Activated CD8-positive, alpha-beta memory T cell treated with anti-CD3 and anti-CD28 coated beads, Interleukin-2, amount 10 ng/mL, durations not matched to agents 7 days and 5 days (primary cell): ENCODE measurements at regions of chr17 and their contacts with region 1.

Region 1: DNA sequence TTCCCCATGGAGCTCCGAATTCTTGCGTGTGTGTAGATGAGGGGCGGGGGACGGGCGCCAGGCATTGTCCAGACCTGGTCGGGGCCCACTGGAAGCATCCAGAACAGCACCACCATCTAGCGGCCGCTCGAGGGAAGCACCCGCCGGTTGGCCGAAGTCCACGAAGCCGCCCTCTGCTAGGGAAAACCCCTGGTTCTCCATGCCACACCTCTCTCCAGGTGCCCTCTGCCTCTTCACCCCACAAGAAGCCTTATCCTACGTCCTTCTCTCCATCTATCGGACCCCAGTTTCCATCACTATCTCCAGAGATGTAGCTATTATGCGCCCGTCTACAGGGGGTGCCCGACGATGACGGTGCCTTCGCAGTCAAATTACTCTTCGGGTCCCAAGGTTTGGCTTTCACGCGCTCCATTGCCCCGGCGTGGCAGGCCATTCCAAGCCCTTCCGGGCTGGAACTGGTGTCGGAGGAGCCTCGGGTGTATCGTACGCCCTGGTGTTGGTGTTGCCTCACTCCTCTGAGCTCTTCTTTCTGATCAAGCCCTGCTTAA is 617 bp upstream of the SENP3 start:
- DNase-seq: peak; percentile 91
- ATAC-seq: peak; percentile 75
- H3K4me3 Mint-ChIP-seq: peak overlapping the region; percentile 85
- H3K27ac Mint-ChIP-seq: peak overlapping the region; percentile 92
- H3K4me1 Mint-ChIP-seq: peaks cover 51% of the 10 kb centered on the region
- H3K27me3 Mint-ChIP-seq: no peaks in the 10 kb centered on the region

Region 2: DNA sequence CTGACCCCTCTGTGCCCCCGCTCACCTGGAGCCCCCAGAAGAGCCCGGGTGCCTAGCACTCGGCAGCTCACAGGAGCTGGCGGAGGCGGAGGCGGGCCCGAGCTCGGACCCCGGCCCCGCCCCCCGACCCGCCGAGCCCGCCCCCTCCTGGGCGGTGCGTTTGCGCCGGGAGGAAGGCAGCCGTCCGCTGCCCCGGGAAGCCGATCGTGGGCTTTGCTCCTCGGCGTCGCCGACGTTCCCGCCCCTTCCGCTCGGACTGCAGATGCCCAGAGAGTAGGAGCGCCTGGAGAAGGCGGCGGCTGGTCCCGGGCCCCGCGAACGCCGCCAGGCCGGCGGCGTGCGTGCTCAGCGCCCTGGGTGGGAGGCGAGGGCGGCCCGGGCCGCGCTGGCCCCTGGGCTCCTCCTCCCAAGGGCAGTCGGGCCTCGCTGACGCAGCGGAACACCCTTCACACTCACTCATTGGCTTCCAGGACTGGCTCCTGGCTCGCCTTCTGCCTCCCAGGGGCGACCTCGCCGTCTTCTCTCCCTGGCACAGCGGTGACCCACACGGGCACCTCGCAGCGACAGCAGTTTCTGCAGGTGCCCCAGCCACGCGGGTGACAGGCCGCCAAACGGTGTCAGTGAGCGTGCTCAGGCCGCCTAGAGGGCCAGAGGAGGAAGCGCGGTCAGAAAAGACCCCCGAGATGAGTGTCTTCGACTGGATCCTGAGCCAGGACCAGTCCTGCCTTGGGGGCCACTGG is 166.5 kb before region 1 on chr17 and contains the start of gene PLSCR3:
- CTCF ChIA-PET with region 1: interaction called, 11 read pairs
- DNase-seq: peak; percentile 86
- ATAC-seq: peak; percentile 92
- H3K4me3 Mint-ChIP-seq: peak within 1 kb of the TSS; percentile 94
- H3K27ac Mint-ChIP-seq: peak within 1 kb of the TSS; percentile 85
- H3K4me1 Mint-ChIP-seq: peaks cover 18% of the 10 kb centered on the region
- H3K27me3 Mint-ChIP-seq: no peaks in the 10 kb centered on the region
- total RNA-seq, gene PLSCR3: 65.5 to 74.2 TPM

Region 3: GRCh38 chr17:7454980-7455379 is 106.1 kb before region 1 on chr17:
- CTCF ChIA-PET with region 1: interaction called, 10 read pairs
- DNase-seq: no peak
- ATAC-seq: no peak
- H3K4me3 Mint-ChIP-seq: peak overlapping the region; percentile 99
- H3K27ac Mint-ChIP-seq: peak overlapping the region; percentile 99
- H3K4me1 Mint-ChIP-seq: peaks cover 23% of the 10 kb centered on the region
- H3K27me3 Mint-ChIP-seq: no peaks in the 10 kb centered on the region

Region 4: GRCh38 chr17:7515911-7516610 is 45.0 kb before region 1 on chr17:
- CTCF ChIA-PET with region 1: interaction called, 172 read pairs
- DNase-seq: no peak
- ATAC-seq: no peak
- H3K4me3 Mint-ChIP-seq: no peak overlapping the region
- H3K27ac Mint-ChIP-seq: no peak overlapping the region
- H3K4me1 Mint-ChIP-seq: no peaks in the 10 kb centered on the region
- H3K27me3 Mint-ChIP-seq: no peaks in the 10 kb centered on the region

Region 5: DNA sequence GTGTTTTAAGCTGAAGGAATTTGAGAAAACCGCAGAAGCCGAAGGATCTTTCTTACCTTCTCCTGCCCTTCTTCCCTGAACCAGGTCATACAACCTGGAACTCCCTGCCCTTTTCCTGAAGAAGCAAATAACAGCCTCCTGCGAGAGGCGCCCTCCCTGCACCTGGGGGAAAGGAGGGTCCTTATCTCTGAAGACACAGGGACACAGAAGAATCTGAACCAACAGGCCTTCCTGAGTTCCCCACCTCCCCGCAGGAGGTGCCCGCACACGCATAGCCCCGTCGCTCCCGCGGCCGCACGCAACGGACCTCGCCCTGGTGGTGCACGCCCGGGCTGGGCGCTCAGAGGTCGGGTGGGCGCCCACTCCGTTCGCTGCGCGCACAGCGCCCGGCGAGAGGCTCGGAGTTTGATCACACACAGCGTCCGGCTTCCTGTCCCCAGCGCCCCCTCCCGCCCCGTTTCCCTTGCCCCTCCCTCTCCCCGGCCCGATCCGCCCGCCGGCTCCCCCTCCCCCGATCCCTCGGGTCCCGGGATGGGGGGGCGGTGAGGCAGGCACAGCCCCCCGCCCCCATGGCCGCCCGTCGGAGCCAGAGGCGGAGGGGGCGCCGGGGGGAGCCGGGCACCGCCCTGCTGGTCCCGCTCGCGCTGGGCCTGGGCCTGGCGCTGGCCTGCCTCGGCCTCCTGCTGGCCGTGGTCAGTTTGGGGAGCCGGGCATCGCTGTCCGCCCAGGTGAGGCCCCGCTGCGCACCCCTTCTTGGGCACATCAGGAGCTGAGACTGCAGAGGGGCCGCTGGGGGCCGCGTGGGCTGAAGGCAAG is 12.3 kb before region 1 on chr17 and contains the start of gene TNFSF12:
- CTCF ChIA-PET with region 1: interaction called, 39 read pairs
- DNase-seq: peak; percentile 78
- ATAC-seq: peak; percentile 80
- H3K4me3 Mint-ChIP-seq: peak within 1 kb of the TSS; percentile 84
- H3K27ac Mint-ChIP-seq: peak within 1 kb of the TSS; percentile 86
- H3K4me1 Mint-ChIP-seq: peaks cover 56% of the 10 kb centered on the region
- H3K27me3 Mint-ChIP-seq: no peaks in the 10 kb centered on the region
- total RNA-seq, gene TNFSF12: 52.8 to 59.4 TPM

Region 6: DNA sequence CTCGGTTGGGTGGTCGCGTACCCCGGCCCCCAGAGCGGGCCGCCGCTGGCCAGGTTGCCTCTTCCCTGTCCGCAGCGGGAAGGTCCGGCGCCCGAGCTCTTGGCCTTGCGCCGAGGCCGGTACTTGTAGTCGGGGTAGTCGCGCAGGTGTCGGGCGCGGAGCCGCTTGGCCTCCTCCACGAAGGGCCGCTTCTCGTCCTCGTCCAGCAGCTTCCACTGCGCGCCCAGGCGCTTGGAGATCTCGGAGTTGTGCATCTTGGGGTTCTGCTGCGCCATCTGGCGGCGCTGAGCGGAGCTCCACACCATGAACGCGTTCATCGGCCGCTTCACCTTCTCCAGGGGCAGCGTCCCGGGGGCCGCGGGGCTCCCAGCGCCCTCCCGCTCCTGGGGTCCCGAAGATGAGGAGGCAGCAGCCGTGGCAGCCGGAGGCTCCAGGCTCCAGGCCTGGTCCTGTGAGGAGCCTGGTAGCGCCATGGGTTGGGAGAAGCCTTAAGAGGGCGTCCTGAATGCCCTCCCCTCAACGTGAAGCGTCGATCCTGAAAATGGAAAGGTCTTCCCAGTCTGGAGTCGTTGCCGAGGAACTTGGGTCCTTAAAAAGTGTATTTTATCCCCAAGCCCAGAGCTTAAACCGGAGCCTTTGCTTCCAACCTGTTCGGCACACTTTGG is 28.2 kb after region 1 on chr17:
- CTCF ChIA-PET with region 1: interaction called, 30 read pairs
- DNase-seq: peak; percentile 73
- ATAC-seq: peak; percentile 77
- H3K4me3 Mint-ChIP-seq: no peak overlapping the region
- H3K27ac Mint-ChIP-seq: no peak overlapping the region
- H3K4me1 Mint-ChIP-seq: peaks cover 17% of the 10 kb centered on the region
- H3K27me3 Mint-ChIP-seq: no peaks in the 10 kb centered on the region

Region 7: DNA sequence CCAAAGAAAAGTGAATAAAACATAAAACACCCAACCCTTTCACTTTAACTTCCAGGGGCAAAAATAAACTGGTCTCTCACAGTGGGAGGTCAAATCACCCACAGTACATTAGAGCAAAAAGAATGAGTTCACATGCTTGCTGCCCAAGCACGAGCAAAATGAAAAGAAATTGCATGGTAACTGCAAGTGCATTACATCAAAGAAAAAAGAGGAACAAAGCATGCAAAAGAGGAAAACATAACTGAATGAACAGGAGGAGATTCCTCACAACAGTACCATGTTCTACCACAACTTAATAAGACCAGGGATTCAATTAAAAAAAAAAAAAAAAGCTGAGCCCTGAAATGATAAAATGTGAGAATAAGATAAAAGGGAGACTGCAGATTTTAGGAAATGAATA is 168.7 kb after region 1 on chr17:
- CTCF ChIA-PET with region 1: no interaction called
- DNase-seq: no peak
- ATAC-seq: no peak
- H3K4me3 Mint-ChIP-seq: no peak overlapping the region
- H3K27ac Mint-ChIP-seq: no peak overlapping the region
- H3K4me1 Mint-ChIP-seq: no peaks in the 10 kb centered on the region
- H3K27me3 Mint-ChIP-seq: peaks cover 31% of the 10 kb centered on the region